CD4-positive, alpha-beta memory T cell (primary cell): ENCODE measurements at regions of chr10 and their contacts with region 1.

Region 1: DNA sequence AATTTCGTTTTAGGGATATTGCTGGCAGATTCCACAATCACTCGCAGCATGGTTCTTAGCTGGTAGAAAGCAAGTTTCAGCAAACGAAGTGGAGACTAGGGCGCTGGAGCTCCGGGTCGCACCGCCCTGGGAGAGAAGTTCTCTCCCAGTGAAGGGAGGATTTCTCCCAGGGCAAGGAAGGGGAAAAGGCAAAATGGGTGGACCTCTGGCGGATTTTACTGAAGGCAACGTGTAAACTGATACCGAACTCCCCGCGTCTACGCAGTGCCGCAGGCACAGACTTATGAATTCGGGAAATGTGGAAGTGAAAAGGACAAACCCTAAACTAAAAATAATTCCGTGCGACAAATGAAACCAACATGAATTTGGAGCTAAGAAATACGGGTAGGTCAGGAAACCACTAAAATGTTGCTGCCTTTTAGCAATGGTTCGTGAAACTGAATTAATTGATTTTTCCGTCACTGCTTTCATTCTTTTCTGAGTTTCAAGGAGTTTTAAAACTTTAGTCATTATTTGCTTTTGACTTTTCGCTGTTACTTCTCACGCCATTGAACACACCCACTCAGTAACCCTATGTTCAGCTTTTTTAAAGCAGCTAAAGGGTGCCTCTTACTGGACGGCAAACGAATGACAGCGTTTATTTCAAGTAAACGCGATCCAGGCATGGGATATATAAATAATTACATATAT is at the start of gene MYOF:
- DNase-seq: peak; percentile 58 to 72 (median 67)
- H3K4me3 ChIP-seq: peak within 1 kb of the TSS; percentile 10 to 80
- H3K4me3 Mint-ChIP-seq: peak within 1 kb of the TSS; percentile 80 to 94 (median 90)
- H3K27ac ChIP-seq: no peak within 1 kb of the TSS
- H3K27ac Mint-ChIP-seq: peak within 1 kb of the TSS in 3 of 7 donors; percentile 23 to 72 (median 36)
- H3K4me1 ChIP-seq: peaks cover 8% of the 10 kb centered on the region
- H3K4me1 Mint-ChIP-seq: peaks cover 7 to 10% (median 8%) of the 10 kb centered on the region in 4 donors
- H3K27me3 ChIP-seq: peaks cover 8% of the 10 kb centered on the region
- H3K27me3 Mint-ChIP-seq: peaks cover 16 to 25% of the 10 kb centered on the region in 2 donors
- total RNA-seq, gene MYOF: 1.2 to 2.2 TPM

Region 2: GRCh38 chr10:92395271-92395670 is 1087.0 kb before region 1 on chr10:
- CTCF ChIA-PET with region 1: no interaction called
- POLR2A ChIA-PET with region 1: no interaction called
- intact Hi-C with region 1: no loop called
- DNase-seq: no peak
- H3K4me3 ChIP-seq: no peak overlapping the region
- H3K4me3 Mint-ChIP-seq: no peak overlapping the region
- H3K27ac ChIP-seq: no peak overlapping the region
- H3K27ac Mint-ChIP-seq: peak overlapping the region in 1 of 7 donors; percentile 42
- H3K4me1 ChIP-seq: no peaks in the 10 kb centered on the region
- H3K4me1 Mint-ChIP-seq: peaks cover 0 to 3% (median 0%) of the 10 kb centered on the region in 4 donors
- H3K27me3 ChIP-seq: no peaks in the 10 kb centered on the region
- H3K27me3 Mint-ChIP-seq: peaks cover 5% of the 10 kb centered on the region in 2 donors

Region 3: DNA sequence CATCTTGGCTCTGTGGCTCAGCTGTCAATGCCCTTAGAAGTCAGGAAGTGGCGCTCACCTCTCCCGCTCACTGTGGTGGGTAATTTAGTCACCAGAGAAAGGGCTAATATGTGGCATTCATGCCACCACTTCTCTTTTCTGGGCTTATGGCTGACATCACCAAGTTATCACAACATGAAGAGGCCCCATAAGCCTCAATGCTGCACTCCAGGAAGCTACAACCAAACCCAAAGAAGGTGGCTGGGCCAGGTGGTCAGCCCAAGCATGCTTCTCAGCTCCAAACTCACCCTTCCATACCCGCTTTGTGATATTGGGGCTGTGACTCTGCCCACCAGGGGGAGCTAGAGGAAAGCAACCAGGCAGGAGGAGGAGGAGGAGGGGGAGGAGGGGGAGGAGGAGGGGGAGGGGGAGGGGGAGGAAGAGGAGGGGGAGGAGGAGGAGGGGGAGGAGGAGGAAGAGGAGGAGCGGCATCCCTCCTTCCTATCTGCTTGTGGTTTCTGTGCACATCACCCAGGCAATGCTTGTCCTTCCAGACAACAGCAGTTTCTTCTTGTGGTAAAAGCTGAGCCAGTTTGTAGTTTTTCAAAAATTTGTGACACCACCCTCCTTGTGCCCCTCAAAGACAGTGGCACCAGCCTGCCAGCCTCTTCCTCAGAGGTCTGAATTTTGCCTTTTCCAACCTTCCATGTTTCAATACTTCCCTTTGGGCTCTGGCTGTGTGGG is 366.5 kb before region 1 on chr10:
- CTCF ChIA-PET with region 1: interaction called, 9 read pairs
- POLR2A ChIA-PET with region 1: no interaction called
- intact Hi-C with region 1: loop called (anchors 5 kb)
- DNase-seq: peak; percentile 64 to 75 (median 66)
- H3K4me3 ChIP-seq: no peak overlapping the region
- H3K4me3 Mint-ChIP-seq: peak overlapping the region in 3 of 8 donors; percentile 24 to 56 (median 34)
- H3K27ac ChIP-seq: no peak overlapping the region
- H3K27ac Mint-ChIP-seq: peak overlapping the region in 6 of 7 donors; percentile 29 to 80 (median 74)
- H3K4me1 ChIP-seq: peaks cover 14% of the 10 kb centered on the region
- H3K4me1 Mint-ChIP-seq: peaks cover 12 to 28% (median 17%) of the 10 kb centered on the region in 4 donors
- H3K27me3 ChIP-seq: no peaks in the 10 kb centered on the region
- H3K27me3 Mint-ChIP-seq: peaks cover 0 to 9% of the 10 kb centered on the region in 2 donors

Region 4: DNA sequence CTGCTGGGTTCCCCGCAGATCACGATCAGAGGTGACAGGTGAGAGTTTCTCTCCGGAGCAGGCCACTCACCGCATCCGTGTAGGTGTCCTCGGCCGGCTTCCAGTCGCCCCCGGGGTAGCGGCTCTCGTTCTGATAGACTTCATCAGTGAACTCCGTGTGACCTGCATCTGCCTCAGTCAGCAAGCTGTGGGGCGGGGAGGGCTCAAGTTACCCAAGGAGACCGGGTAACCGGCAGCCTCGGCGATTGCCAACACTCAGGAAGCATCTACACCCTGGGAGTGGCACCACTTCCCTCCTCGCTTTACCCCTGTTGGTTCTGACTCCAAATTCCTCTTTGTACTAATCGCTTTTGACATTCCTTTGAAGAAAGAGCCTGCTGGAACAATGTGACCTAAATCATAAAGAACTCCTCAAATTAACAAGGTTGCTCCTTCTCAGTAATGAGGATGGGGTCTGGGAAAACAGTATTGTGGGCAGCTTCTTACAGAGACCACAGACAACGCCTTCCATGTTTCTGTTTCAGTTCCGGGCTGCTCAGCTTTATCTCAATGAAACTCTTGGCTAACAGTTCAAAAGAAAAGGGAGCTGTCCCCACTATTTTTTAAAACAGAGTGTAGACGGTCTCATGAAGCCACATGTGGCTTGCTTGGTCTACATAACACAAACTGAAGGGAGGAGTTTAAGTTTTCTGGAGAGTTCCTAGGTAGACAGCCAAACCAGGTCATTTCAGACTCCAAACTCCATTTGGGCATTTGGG is 118.2 kb before region 1 on chr10:
- CTCF ChIA-PET with region 1: interaction called, 25 read pairs
- POLR2A ChIA-PET with region 1: no interaction called
- intact Hi-C with region 1: no loop called
- DNase-seq: no peak
- H3K4me3 ChIP-seq: no peak overlapping the region
- H3K4me3 Mint-ChIP-seq: no peak overlapping the region
- H3K27ac ChIP-seq: no peak overlapping the region
- H3K27ac Mint-ChIP-seq: peak overlapping the region in 1 of 7 donors; percentile 20
- H3K4me1 ChIP-seq: no peaks in the 10 kb centered on the region
- H3K4me1 Mint-ChIP-seq: peaks cover 2 to 6% (median 3%) of the 10 kb centered on the region in 4 donors
- H3K27me3 ChIP-seq: no peaks in the 10 kb centered on the region
- H3K27me3 Mint-ChIP-seq: peaks cover 0 to 2% of the 10 kb centered on the region in 2 donors

Region 5: GRCh38 chr10:93403152-93404041 is 78.9 kb before region 1 on chr10:
- CTCF ChIA-PET with region 1: interaction called, 11 read pairs
- POLR2A ChIA-PET with region 1: no interaction called
- intact Hi-C with region 1: no loop called
- DNase-seq: no peak
- H3K4me3 ChIP-seq: no peak overlapping the region
- H3K4me3 Mint-ChIP-seq: no peak overlapping the region
- H3K27ac ChIP-seq: no peak overlapping the region
- H3K27ac Mint-ChIP-seq: no peak overlapping the region
- H3K4me1 ChIP-seq: no peaks in the 10 kb centered on the region
- H3K4me1 Mint-ChIP-seq: peaks cover 0 to 3% (median under 1%) of the 10 kb centered on the region in 4 donors
- H3K27me3 ChIP-seq: no peaks in the 10 kb centered on the region
- H3K27me3 Mint-ChIP-seq: no peaks in the 10 kb centered on the region

Region 6: GRCh38 chr10:93463678-93464476 is 18.4 kb before region 1 on chr10:
- CTCF ChIA-PET with region 1: interaction called, 11 read pairs
- POLR2A ChIA-PET with region 1: no interaction called
- intact Hi-C with region 1: no loop called
- DNase-seq: no peak
- H3K4me3 ChIP-seq: no peak overlapping the region
- H3K4me3 Mint-ChIP-seq: no peak overlapping the region
- H3K27ac ChIP-seq: no peak overlapping the region
- H3K27ac Mint-ChIP-seq: no peak overlapping the region
- H3K4me1 ChIP-seq: peaks cover 17% of the 10 kb centered on the region
- H3K4me1 Mint-ChIP-seq: peaks cover 5 to 23% (median 12%) of the 10 kb centered on the region in 4 donors
- H3K27me3 ChIP-seq: no peaks in the 10 kb centered on the region
- H3K27me3 Mint-ChIP-seq: peaks cover 0 to 2% of the 10 kb centered on the region in 2 donors

Region 7: GRCh38 chr10:93496322-93497041 is 14.2 kb after region 1 on chr10 and contains the start of gene CEP55:
- CTCF ChIA-PET with region 1: interaction called, 30 read pairs
- POLR2A ChIA-PET with region 1: interaction called, 6 read pairs
- intact Hi-C with region 1: no loop called
- DNase-seq: peak; percentile 93 to 97 (median 94)
- H3K4me3 ChIP-seq: peak within 1 kb of the TSS; percentile 83 to 94
- H3K4me3 Mint-ChIP-seq: peak within 1 kb of the TSS; percentile 92 to 95 (median 93)
- H3K27ac ChIP-seq: peak within 1 kb of the TSS; percentile 37
- H3K27ac Mint-ChIP-seq: peak within 1 kb of the TSS; percentile 54 to 92 (median 89)
- H3K4me1 ChIP-seq: peaks cover 23% of the 10 kb centered on the region
- H3K4me1 Mint-ChIP-seq: peaks cover 13 to 23% (median 19%) of the 10 kb centered on the region in 4 donors
- H3K27me3 ChIP-seq: no peaks in the 10 kb centered on the region
- H3K27me3 Mint-ChIP-seq: no peaks in the 10 kb centered on the region
- total RNA-seq, gene CEP55: 0.17 to 0.30 TPM

Region 8: GRCh38 chr10:93509816-93510215 is 27.5 kb after region 1 on chr10:
- CTCF ChIA-PET with region 1: interaction called, 126 read pairs
- POLR2A ChIA-PET with region 1: no interaction called
- intact Hi-C with region 1: loop called (anchors 2 kb)
- DNase-seq: no peak
- H3K4me3 ChIP-seq: no peak overlapping the region
- H3K4me3 Mint-ChIP-seq: no peak overlapping the region
- H3K27ac ChIP-seq: no peak overlapping the region
- H3K27ac Mint-ChIP-seq: no peak overlapping the region
- H3K4me1 ChIP-seq: no peaks in the 10 kb centered on the region
- H3K4me1 Mint-ChIP-seq: peaks cover 0 to 11% (median 8%) of the 10 kb centered on the region in 4 donors
- H3K27me3 ChIP-seq: no peaks in the 10 kb centered on the region
- H3K27me3 Mint-ChIP-seq: no peaks in the 10 kb centered on the region